ENCODE measurements at regions of chr16 and their contacts with region 1.

Region 1: DNA sequence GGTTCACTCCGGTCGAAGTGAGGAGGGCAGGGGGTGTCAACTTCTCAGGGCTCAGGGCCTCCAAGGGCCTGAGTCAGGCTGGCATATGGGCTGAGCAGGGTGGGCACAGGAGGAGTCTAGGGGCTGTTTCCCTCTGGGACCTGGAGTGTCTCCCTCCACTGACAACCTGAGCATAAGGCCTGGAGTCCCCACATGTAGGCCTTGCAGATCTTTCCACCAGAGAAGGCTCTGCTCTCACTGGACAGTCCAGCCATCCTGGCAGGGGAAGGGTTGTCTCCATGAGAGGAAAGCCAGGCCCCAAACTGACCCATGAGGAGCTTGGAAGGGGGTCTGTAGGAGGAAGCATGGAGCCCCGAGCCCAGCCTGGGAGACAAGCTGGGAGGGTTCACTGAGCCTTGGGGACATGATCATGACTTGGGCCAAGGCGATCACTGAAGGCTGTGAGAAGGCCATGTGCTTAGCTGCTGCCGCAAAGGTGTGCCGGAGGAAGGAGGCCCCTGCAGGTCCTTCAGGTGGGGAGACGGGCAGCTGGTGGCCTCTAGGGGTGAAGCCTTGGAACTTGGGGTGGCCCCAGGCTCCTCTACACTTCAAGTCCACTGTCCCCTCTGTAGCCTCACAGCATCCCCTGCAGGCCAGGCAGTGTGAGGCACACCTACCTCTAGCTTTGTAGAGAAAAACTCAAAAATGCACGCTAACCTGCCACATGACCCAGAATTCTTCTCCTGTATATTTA is 9.9 kb downstream of the CMTM2 start:
- DNase-seq: peak; percentile 48 to 78 (median 63)
- ATAC-seq: peak; percentile 92 to 96 (median 94)
- H3K4me3 ChIP-seq: no peak overlapping the region
- H3K4me3 Mint-ChIP-seq: peak overlapping the region; percentile 75 to 89 (median 84)
- H3K27ac ChIP-seq: no peak overlapping the region
- H3K27ac Mint-ChIP-seq: peak overlapping the region; percentile 86 to 94
- H3K4me1 ChIP-seq: peaks cover 13 to 32% of the 10 kb centered on the region in 2 experiments
- H3K4me1 Mint-ChIP-seq: peaks cover 24 to 40% (median 33%) of the 10 kb centered on the region in 3 donors
- H3K27me3 ChIP-seq: peaks cover 0 to 2% of the 10 kb centered on the region in 2 experiments
- H3K27me3 Mint-ChIP-seq: no peaks in the 10 kb centered on the region

Region 2: GRCh38 chr16:66406534-66407221 is 182.5 kb before region 1 on chr16:
- CTCF ChIA-PET with region 1: interaction called in 1 of 2 experiments, 11 read pairs
- POLR2A ChIA-PET with region 1: no interaction called
- DNase-seq: peak; percentile 49 to 92 (median 83)
- ATAC-seq: peak; percentile 73 to 79 (median 78)
- H3K4me3 ChIP-seq: peak overlapping the region; percentile 64 to 76
- H3K4me3 Mint-ChIP-seq: peak overlapping the region; percentile 81 to 86 (median 85)
- H3K27ac ChIP-seq: no peak overlapping the region
- H3K27ac Mint-ChIP-seq: peak overlapping the region; percentile 6 to 22
- H3K4me1 ChIP-seq: peaks cover 12 to 25% of the 10 kb centered on the region in 2 experiments
- H3K4me1 Mint-ChIP-seq: peaks cover 25 to 33% (median 31%) of the 10 kb centered on the region in 3 donors
- H3K27me3 ChIP-seq: peaks cover 0 to 27% of the 10 kb centered on the region in 2 experiments
- H3K27me3 Mint-ChIP-seq: peaks cover 0 to 12% of the 10 kb centered on the region in 2 donors

Region 3: GRCh38 chr16:66562407-66562806 is 26.7 kb before region 1 on chr16:
- CTCF ChIA-PET with region 1: interaction called, 10 to 27 read pairs
- POLR2A ChIA-PET with region 1: interaction called in 1 of 2 experiments, 3 read pairs
- DNase-seq: peak in 1 of 35 experiments; percentile 51
- ATAC-seq: peak in 3 of 4 experiments; percentile 60 to 78 (median 64)
- H3K4me3 ChIP-seq: no peak overlapping the region
- H3K4me3 Mint-ChIP-seq: no peak overlapping the region
- H3K27ac ChIP-seq: peak overlapping the region; percentile 19
- H3K27ac Mint-ChIP-seq: peak overlapping the region; percentile 78 to 81
- H3K4me1 ChIP-seq: peaks cover 5 to 29% of the 10 kb centered on the region in 2 experiments
- H3K4me1 Mint-ChIP-seq: peaks cover 55 to 67% (median 66%) of the 10 kb centered on the region in 3 donors
- H3K27me3 ChIP-seq: no peaks in the 10 kb centered on the region
- H3K27me3 Mint-ChIP-seq: no peaks in the 10 kb centered on the region

Region 4: DNA sequence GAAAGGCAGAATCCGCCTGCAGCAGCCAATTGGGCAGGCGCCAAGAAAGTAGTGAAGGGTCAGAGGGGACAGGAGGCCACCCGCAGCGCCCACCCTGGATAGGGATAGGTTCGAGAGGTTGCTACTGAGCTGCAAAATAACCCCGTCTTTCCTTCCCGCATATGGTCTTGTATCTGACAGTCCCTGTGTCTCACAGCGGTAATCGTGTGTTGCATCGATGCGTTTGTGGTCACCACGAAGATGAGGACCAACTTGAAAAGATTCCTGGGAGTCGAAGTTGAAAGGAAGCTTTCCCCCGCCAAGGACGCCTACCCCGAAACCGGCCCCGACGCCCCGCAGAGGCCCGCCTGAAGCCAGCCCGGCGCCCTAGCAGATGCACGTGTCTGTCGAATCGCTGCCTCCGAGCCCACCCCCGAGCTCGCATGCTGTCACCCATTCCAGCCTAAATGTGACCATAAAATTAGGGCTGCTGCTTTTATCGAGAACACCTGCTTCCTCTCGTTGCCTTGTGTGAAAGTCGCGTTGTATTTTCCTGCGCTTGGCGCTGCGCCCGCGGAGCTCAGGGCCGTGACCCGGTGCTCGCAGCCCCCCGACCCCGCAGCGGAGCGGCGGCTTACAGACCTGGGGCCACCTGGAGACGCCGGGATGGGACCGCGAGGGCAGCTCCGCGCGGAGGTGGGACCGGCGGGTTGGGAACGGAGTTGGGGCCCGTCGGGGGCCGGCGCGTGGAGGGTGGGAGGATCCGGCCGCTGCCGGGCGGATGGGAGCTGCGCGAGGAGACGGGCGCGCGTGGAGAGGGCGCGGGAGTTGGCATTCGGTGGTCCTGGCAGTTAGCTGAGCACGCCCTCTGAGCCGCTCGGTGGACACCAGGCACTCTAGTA is 10.3 kb before region 1 on chr16 and contains the start of gene CMTM2:
- CTCF ChIA-PET with region 1: interaction called in 1 of 2 experiments, 11 read pairs
- POLR2A ChIA-PET with region 1: interaction called in 1 of 2 experiments, 4 read pairs
- DNase-seq: peak in 17 of 35 experiments; percentile 5 to 38 (median 24)
- ATAC-seq: peak; percentile 54 to 72 (median 68)
- H3K4me3 ChIP-seq: peak within 1 kb of the TSS; percentile 34 to 72
- H3K4me3 Mint-ChIP-seq: peak within 1 kb of the TSS; percentile 62 to 72 (median 68)
- H3K27ac ChIP-seq: no peak within 1 kb of the TSS
- H3K27ac Mint-ChIP-seq: no peak within 1 kb of the TSS
- H3K4me1 ChIP-seq: peaks cover 2 to 15% of the 10 kb centered on the region in 2 experiments
- H3K4me1 Mint-ChIP-seq: peaks cover 11 to 17% (median 12%) of the 10 kb centered on the region in 3 donors
- H3K27me3 ChIP-seq: peaks cover 4 to 24% of the 10 kb centered on the region in 2 experiments
- H3K27me3 Mint-ChIP-seq: peaks cover 7 to 38% of the 10 kb centered on the region in 2 donors
- total RNA-seq, gene CMTM2: 0.26 to 0.62 TPM in 2 of 5 donors, not detected in the others

Region 5: GRCh38 chr16:66608241-66609138 is 19.3 kb after region 1 on chr16:
- CTCF ChIA-PET with region 1: interaction called in 1 of 2 experiments, 17 read pairs
- POLR2A ChIA-PET with region 1: no interaction called
- DNase-seq: peak; percentile 53 to 88 (median 73)
- ATAC-seq: peak; percentile 21 to 41 (median 31)
- H3K4me3 ChIP-seq: no peak overlapping the region
- H3K4me3 Mint-ChIP-seq: peak overlapping the region in 2 of 3 donors; percentile 17 to 38
- H3K27ac ChIP-seq: peak overlapping the region; percentile 44
- H3K27ac Mint-ChIP-seq: peak overlapping the region; percentile 83 to 93
- H3K4me1 ChIP-seq: peaks cover 9 to 48% of the 10 kb centered on the region in 2 experiments
- H3K4me1 Mint-ChIP-seq: peaks cover 30 to 38% (median 35%) of the 10 kb centered on the region in 3 donors
- H3K27me3 ChIP-seq: no peaks in the 10 kb centered on the region
- H3K27me3 Mint-ChIP-seq: no peaks in the 10 kb centered on the region

Measured in T-cell (primary cell).